ENCODE measurements at regions of chr18 and their contacts with region 1.

Region 1: GRCh38 chr18:63161761-63162195 is 157.8 kb downstream of the BCL2 start:
- DNase-seq: peak; percentile 98
- ATAC-seq: peak; percentile 60
- H3K4me3 ChIP-seq: peak overlapping the region; percentile 62; the same call in 1 of the 2 replicates
- H3K27ac ChIP-seq: peak overlapping the region; percentile 100
- H3K4me1 ChIP-seq: peaks cover 59% of the 10 kb centered on the region
- H3K27me3 ChIP-seq: no peaks in the 10 kb centered on the region
- CTCF ChIP-seq: no peak
- EP300 ChIP-seq: peak; percentile 98
- POLR2A ChIP-seq: peak; percentile 94
- RAD21 ChIP-seq: peak; percentile 35

Region 2: DNA sequence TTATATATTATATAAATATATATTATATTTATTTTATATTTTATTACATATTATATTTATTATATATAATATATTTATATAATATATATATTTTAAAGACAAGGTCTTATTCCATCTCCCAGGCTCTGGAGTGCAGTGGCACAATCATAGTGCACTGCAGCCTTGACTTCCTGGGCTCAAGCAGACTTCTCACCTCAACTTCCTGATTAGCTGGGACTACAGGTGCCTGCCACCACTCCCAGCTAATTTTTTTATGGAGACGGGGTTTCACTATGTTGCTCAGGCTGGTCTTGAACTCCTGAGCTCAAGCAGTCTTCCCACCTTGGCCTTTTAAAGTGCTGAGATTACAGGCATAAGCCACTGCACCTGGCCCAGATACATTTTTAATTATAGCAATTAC is 336.4 kb before region 1 on chr18:
- CTCF ChIA-PET with region 1: no interaction called
- POLR2A ChIA-PET with region 1: no interaction called
- RAD21 ChIA-PET with region 1: no interaction called
- SMC1A ChIA-PET with region 1: no interaction called
- in situ Hi-C with region 1: no loop called
- intact Hi-C with region 1: no loop called
- DNase-seq: no peak
- ATAC-seq: no peak
- H3K4me3 ChIP-seq: no peak overlapping the region
- H3K27ac ChIP-seq: no peak overlapping the region
- H3K4me1 ChIP-seq: peaks cover 4% of the 10 kb centered on the region
- H3K27me3 ChIP-seq: no peaks in the 10 kb centered on the region
- CTCF ChIP-seq: no peak
- EP300 ChIP-seq: no peak
- POLR2A ChIP-seq: no peak
- RAD21 ChIP-seq: no peak

Region 3: GRCh38 chr18:63105636-63106316 is 56.0 kb before region 1 on chr18:
- CTCF ChIA-PET with region 1: interaction called, 3 read pairs
- POLR2A ChIA-PET with region 1: no interaction called
- RAD21 ChIA-PET with region 1: interaction called, 4 read pairs
- SMC1A ChIA-PET with region 1: interaction called, 9 read pairs
- in situ Hi-C with region 1: no loop called
- intact Hi-C with region 1: loop called (anchors 2 kb)
- DNase-seq: peak; percentile 73
- ATAC-seq: peak; percentile 81
- H3K4me3 ChIP-seq: peak overlapping the region; percentile 36; the same call in 1 of the 2 replicates
- H3K27ac ChIP-seq: peak overlapping the region; percentile 97
- H3K4me1 ChIP-seq: peaks cover 28% of the 10 kb centered on the region
- H3K27me3 ChIP-seq: no peaks in the 10 kb centered on the region
- CTCF ChIP-seq: no peak
- EP300 ChIP-seq: peak in 1 of 2 experiments; percentile 7; a peak in 1 of 4 replicates
- POLR2A ChIP-seq: no peak
- RAD21 ChIP-seq: no peak

Region 4: DNA sequence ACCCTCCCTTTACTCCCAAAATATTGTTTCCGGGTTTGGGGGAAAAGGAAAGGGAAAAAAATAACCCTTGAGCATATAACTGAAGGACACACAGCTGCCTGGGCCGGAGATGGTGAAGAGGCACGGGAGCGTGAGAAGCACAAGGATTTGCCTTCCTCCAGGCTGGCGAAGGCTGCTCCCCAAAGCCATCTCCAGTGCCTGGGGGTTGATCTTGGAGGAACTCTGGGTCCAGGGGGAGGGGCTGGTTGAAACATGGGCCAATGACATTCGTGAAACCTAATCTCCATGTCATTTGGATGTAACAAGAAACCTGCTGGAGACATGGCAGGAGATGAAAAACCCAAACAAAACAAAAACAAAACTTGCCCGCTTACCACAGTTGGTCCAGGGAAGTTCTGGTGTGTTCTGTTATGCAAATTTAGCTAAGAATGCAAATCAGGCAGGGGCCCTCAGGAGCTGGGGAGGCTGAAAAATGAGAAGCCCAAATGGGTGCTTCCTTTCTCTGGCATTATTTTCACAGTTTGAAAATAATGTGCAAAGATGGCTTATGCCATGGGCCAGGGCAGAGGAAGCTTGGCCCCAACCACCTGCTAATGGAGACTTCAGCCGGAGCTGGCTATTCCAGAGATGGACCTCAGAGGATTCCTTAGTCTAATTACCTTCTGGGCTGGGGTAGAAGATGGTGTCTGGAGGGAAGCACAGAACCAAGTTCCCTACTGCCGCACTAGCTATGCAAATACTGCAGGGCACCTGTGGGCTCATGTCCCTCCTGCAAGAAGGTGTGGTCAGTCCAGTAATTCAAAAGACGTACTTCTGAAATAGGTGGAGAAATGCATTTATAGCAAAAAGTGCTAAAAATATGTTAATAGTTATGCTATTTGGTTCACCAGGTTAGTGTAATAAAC is 23.1 kb before region 1 on chr18:
- CTCF ChIA-PET with region 1: interaction called, 416 read pairs
- POLR2A ChIA-PET with region 1: interaction called, 278 read pairs
- RAD21 ChIA-PET with region 1: interaction called, 463 read pairs
- SMC1A ChIA-PET with region 1: interaction called, 453 read pairs
- in situ Hi-C with region 1: no loop called
- intact Hi-C with region 1: no loop called
- DNase-seq: peak; percentile 94
- ATAC-seq: peak; percentile 58
- H3K4me3 ChIP-seq: peak overlapping the region; percentile 65
- H3K27ac ChIP-seq: peak overlapping the region; percentile 96
- H3K4me1 ChIP-seq: peaks cover 72% of the 10 kb centered on the region
- H3K27me3 ChIP-seq: no peaks in the 10 kb centered on the region
- CTCF ChIP-seq: no peak
- EP300 ChIP-seq: peak in 1 of 2 experiments; percentile 69; a peak in 1 of 4 replicates
- POLR2A ChIP-seq: peak; percentile 74
- RAD21 ChIP-seq: no peak

Region 5: GRCh38 chr18:63177919-63178821 is 16.4 kb after region 1 on chr18:
- CTCF ChIA-PET with region 1: interaction called, 12 read pairs
- POLR2A ChIA-PET with region 1: interaction called, 11 read pairs
- RAD21 ChIA-PET with region 1: interaction called, 51 read pairs
- SMC1A ChIA-PET with region 1: interaction called, 70 read pairs
- in situ Hi-C with region 1: no loop called
- intact Hi-C with region 1: loop called (anchors 1 kb)
- DNase-seq: no peak
- ATAC-seq: peak; percentile 16; the same call in 2 of the 3 replicates
- H3K4me3 ChIP-seq: no peak overlapping the region
- H3K27ac ChIP-seq: peak overlapping the region; percentile 64
- H3K4me1 ChIP-seq: peaks cover 81% of the 10 kb centered on the region
- H3K27me3 ChIP-seq: no peaks in the 10 kb centered on the region
- CTCF ChIP-seq: no peak
- EP300 ChIP-seq: no peak; a peak in 1 of 4 replicates
- POLR2A ChIP-seq: no peak
- RAD21 ChIP-seq: 0 out of 2 replicates have a peak, but pooled peaks have one; percentile 12

Region 6: GRCh38 chr18:63192885-63193349 is 31.1 kb after region 1 on chr18:
- CTCF ChIA-PET with region 1: interaction called, 16 read pairs
- POLR2A ChIA-PET with region 1: interaction called, 9 read pairs
- RAD21 ChIA-PET with region 1: interaction called, 29 read pairs
- SMC1A ChIA-PET with region 1: interaction called, 39 read pairs
- in situ Hi-C with region 1: no loop called
- intact Hi-C with region 1: loop called (anchors 5 kb)
- DNase-seq: peak; percentile 72
- ATAC-seq: peak; percentile 75
- H3K4me3 ChIP-seq: no peak overlapping the region
- H3K27ac ChIP-seq: peak overlapping the region; percentile 51
- H3K4me1 ChIP-seq: peaks cover 27% of the 10 kb centered on the region
- H3K27me3 ChIP-seq: no peaks in the 10 kb centered on the region
- CTCF ChIP-seq: no peak
- EP300 ChIP-seq: peak; percentile 85 to 86
- POLR2A ChIP-seq: no peak
- RAD21 ChIP-seq: no peak

Region 7: DNA sequence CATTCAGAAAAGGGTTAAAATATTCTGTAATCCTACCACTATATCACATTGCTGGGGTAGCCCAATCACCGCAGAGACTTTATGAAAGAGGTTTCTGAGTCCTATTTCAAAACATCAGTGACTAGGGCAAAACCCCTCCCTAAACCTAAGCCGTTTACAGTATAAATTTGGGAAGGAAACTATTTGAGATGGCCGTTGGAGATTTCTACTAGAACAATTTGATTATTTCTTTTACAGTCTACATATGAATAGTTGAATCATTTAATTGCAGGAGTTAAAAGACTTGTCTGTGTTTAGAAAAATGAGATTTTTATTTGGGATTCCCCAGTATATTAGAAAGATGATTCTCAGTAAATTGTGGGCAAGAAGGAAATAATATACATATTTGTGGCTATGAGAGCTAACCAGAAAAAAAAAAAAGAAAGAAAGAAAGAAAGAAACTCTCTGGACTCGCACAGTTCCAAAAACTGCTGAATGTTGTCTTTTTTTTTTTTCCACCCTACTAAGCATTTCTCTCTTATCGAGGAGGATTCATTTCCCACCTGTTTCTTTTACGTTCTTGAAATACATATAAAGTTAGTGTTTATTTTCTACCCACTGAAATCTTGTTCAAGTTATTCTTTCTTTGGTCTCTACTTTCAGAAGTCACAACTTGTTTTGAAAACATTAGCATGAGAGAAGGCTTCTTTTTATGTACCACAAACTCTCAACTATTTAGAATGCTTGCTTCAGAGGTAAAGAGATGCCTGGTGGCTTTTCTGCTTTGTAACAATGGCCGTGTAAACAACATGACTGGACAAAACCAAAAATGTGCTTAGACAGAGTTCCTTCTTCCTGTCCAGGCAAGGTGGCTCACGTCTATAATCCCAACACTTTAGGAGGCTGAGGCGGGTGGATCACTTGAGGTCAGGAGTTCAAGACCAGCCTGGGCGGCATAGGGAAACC is 91.9 kb after region 1 on chr18:
- CTCF ChIA-PET with region 1: no interaction called
- POLR2A ChIA-PET with region 1: interaction called, 3 read pairs
- RAD21 ChIA-PET with region 1: no interaction called
- SMC1A ChIA-PET with region 1: interaction called, 11 read pairs
- in situ Hi-C with region 1: no loop called
- intact Hi-C with region 1: no loop called
- DNase-seq: no peak
- ATAC-seq: peak; percentile 24
- H3K4me3 ChIP-seq: peak overlapping the region; percentile 22; the same call in 1 of the 2 replicates
- H3K27ac ChIP-seq: peak overlapping the region; percentile 64
- H3K4me1 ChIP-seq: peaks cover 35% of the 10 kb centered on the region
- H3K27me3 ChIP-seq: no peaks in the 10 kb centered on the region
- CTCF ChIP-seq: no peak
- EP300 ChIP-seq: no peak
- POLR2A ChIP-seq: no peak
- RAD21 ChIP-seq: no peak

Region 8: GRCh38 chr18:63422087-63422809 is 260.5 kb after region 1 on chr18 and contains the start of gene VPS4B:
- CTCF ChIA-PET with region 1: no interaction called
- POLR2A ChIA-PET with region 1: no interaction called
- RAD21 ChIA-PET with region 1: no interaction called
- SMC1A ChIA-PET with region 1: no interaction called
- in situ Hi-C with region 1: no loop called
- intact Hi-C with region 1: no loop called
- DNase-seq: peak; percentile 98
- ATAC-seq: peak; percentile 97
- H3K4me3 ChIP-seq: peak within 1 kb of the TSS; percentile 90
- H3K27ac ChIP-seq: peak within 1 kb of the TSS; percentile 94
- H3K4me1 ChIP-seq: no peaks in the 10 kb centered on the region
- H3K27me3 ChIP-seq: no peaks in the 10 kb centered on the region
- CTCF ChIP-seq: no peak
- EP300 ChIP-seq: no peak
- POLR2A ChIP-seq: peak; percentile 90
- RAD21 ChIP-seq: no peak
- polyA plus RNA-seq, gene VPS4B: 25.7 to 29.9 TPM